ENCODE measurements at regions of chr3 and their contacts with region 1.

Region 1: GRCh38 chr3:58670506-58671135 is 4.0 kb upstream of the FAM3D start:
- DNase-seq: no peak
- ATAC-seq: no peak
- H3K4me3 ChIP-seq: no peak overlapping the region
- H3K4me3 Mint-ChIP-seq: no peak overlapping the region
- H3K27ac ChIP-seq: no peak overlapping the region
- H3K27ac Mint-ChIP-seq: no peak overlapping the region
- H3K4me1 ChIP-seq: no peaks in the 10 kb centered on the region
- H3K4me1 Mint-ChIP-seq: peaks cover 0 to 2% (median 0%) of the 10 kb centered on the region in 7 donors
- H3K27me3 ChIP-seq: no peaks in the 10 kb centered on the region
- H3K27me3 Mint-ChIP-seq: peaks cover under 1 to 18% (median 8%) of the 10 kb centered on the region in 5 donors

Region 2: DNA sequence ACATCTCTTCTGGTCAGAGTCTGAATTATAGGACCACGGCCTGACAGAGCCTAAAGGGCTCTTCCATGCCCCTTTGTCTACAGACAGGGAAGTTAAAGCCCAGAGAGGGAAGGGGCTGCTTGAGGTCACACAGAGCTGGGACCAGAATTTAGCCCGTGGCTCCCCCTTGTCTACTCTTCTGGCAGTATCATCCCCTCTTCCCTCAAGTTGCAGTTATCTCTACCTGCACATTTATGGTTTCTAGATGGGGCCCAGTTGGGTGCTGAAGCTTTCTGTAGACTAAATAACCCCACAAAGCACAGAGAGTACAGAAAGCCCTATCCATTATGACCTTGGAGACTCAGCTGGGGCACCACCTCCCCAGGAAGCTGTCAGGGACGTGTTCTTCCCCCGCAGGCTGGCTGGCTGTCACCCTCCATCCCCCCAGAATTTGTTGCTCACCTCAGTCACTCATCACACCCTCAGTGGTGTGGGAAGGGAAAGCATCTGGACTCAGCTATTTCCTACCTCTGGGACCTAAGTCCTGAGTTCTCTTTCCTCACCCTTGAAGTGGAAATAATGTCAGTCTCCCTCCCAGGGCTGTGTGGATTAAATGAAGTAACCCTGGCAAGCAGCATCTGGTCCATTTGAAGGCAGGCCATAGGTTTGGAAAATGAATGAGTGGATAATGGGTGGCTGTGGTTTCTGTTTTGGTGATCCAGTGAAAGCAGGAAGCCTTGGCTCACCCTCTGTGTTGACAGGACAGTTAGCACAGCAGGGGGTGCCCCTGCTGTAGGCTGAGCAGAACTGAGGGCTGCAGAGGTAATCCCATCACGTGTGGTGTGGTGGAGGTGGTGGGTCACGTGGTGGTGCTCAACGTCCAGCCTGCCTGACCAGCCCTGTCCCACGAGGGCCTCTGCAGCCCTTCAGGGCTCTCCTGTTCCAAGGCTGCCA is 150.0 kb before region 1 on chr3:
- CTCF ChIA-PET with region 1: no interaction called
- POLR2A ChIA-PET with region 1: no interaction called
- intact Hi-C with region 1: no loop called
- DNase-seq: no peak
- ATAC-seq: no peak
- H3K4me3 ChIP-seq: no peak overlapping the region
- H3K4me3 Mint-ChIP-seq: no peak overlapping the region
- H3K27ac ChIP-seq: no peak overlapping the region
- H3K27ac Mint-ChIP-seq: no peak overlapping the region
- H3K4me1 ChIP-seq: no peaks in the 10 kb centered on the region
- H3K4me1 Mint-ChIP-seq: no peaks in the 10 kb centered on the region
- H3K27me3 ChIP-seq: no peaks in the 10 kb centered on the region
- H3K27me3 Mint-ChIP-seq: peaks cover 0 to 6% (median 0%) of the 10 kb centered on the region in 5 donors

Region 3: GRCh38 chr3:58659051-58659675 is 11.5 kb before region 1 on chr3:
- CTCF ChIA-PET with region 1: no interaction called
- POLR2A ChIA-PET with region 1: no interaction called
- intact Hi-C with region 1: no loop called
- DNase-seq: no peak
- ATAC-seq: no peak
- H3K4me3 ChIP-seq: no peak overlapping the region
- H3K4me3 Mint-ChIP-seq: no peak overlapping the region
- H3K27ac ChIP-seq: no peak overlapping the region
- H3K27ac Mint-ChIP-seq: no peak overlapping the region
- H3K4me1 ChIP-seq: no peaks in the 10 kb centered on the region
- H3K4me1 Mint-ChIP-seq: peaks cover 0 to 3% (median 0%) of the 10 kb centered on the region in 7 donors
- H3K27me3 ChIP-seq: no peaks in the 10 kb centered on the region
- H3K27me3 Mint-ChIP-seq: peaks cover 5 to 18% (median 13%) of the 10 kb centered on the region in 5 donors

Region 4: DNA sequence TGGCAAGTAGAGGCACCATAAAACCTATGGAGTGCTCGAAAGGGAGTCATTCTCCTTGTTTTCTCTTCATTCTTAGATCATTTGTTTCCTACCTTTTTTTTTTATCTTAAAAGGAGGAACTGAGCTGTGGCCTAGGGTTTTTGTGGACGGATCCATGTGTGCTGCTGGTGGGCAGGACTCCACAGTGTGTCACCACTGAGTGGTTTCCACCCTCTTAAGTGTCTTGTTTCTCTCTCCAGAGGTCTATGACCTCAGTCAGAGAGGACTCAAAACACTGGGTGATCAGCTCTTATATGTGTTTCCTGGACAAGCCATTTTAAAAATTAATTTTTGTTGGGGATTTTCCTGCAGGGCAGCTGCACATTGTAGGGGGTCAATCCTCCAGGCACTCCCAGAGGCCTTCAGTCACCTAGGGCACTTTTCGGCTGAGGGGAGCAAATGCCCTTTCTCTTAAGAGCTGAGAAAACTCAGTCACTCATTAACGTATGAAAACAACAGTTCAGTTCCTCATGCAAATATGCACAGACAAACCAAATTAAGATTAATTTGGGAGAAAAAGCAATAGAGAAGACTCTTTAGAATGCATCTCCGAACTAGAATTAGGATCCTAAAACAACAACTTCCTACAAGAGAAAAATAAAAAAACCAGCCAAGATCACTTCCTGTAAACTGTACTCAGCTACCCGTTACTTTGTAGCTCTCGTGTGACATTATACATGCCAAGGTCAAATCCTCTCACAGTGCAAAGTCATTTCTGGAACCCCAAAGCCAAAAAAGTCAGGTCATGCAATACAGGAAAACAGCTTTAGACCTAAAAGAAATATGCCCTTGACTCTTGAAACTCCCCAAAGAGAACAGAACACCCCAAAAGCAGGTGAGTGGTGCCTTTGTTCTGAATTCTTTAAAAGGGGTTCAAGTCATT is 23.6 kb after region 1 on chr3:
- CTCF ChIA-PET with region 1: no interaction called
- POLR2A ChIA-PET with region 1: interaction called, 4 read pairs
- intact Hi-C with region 1: loop called in 1 of 2 experiments (anchors 1 kb)
- DNase-seq: no peak
- ATAC-seq: no peak
- H3K4me3 ChIP-seq: no peak overlapping the region
- H3K4me3 Mint-ChIP-seq: no peak overlapping the region
- H3K27ac ChIP-seq: no peak overlapping the region
- H3K27ac Mint-ChIP-seq: peak overlapping the region in 1 of 9 donors; percentile 4
- H3K4me1 ChIP-seq: no peaks in the 10 kb centered on the region
- H3K4me1 Mint-ChIP-seq: peaks cover 0 to 8% (median 0%) of the 10 kb centered on the region in 7 donors
- H3K27me3 ChIP-seq: no peaks in the 10 kb centered on the region
- H3K27me3 Mint-ChIP-seq: peaks cover 0 to 11% (median 11%) of the 10 kb centered on the region in 5 donors